ENCODE measurements at regions of chr1 and their contacts with region 1.

Region 1: GRCh38 chr1:1943834-1944570 is 24.9 kb upstream of the TMEM52 start:
- DNase-seq: no peak
- ATAC-seq: peak; percentile 94
- H3K4me3 ChIP-seq: no peak overlapping the region
- H3K27ac ChIP-seq: no peak overlapping the region
- H3K4me1 ChIP-seq: no peaks in the 10 kb centered on the region
- H3K27me3 ChIP-seq: no peaks in the 10 kb centered on the region
- CTCF ChIP-seq: peak; percentile 50 to 91 (median 71)
- EP300 ChIP-seq: no peak
- POLR2A ChIP-seq: no peak
- RAD21 ChIP-seq: 0 out of 2 replicates have a peak, but pooled peaks have one; percentile 14

Region 2: DNA sequence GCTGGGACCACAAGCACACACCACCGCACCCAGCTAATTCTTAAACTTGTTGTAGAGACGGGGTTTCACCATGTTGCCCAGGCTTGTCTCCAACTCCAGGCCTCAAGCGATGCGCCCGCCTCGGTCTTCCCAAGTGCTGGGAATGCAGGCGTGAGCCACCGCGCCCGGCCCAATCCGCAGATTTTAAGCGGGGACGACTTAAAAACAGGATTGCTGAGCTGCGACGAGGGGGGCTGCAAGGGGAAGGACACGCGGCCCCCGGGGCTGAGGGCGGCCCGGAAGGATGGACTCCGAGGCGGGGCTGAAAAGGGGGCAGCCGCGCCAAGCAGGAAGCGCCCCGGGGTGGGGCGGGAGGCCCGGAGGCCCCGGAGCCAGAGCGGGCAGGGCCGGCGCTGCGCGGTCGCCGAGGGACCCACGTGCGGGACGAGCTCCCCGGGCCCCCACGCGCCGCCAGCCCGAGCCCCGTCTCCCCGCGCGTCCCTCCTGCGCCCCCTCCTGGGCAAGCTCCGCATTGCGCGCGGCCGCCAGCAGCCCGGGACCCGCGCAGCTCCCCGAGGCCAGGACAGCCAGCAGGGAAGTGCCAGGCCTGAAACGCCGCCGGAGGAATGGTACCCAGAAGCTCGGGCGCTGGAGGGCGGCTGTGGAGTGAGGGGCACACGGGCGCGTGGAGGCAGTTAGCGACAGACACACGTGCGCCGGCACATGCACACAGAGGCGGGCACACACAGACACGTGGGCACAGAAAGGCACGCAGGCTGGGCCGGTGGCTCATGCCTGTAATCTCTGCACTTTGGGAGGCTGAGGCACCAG is 100.7 kb after region 1 on chr1:
- CTCF ChIA-PET with region 1: no interaction called
- POLR2A ChIA-PET with region 1: no interaction called
- RAD21 ChIA-PET with region 1: no interaction called
- SMC1A ChIA-PET with region 1: interaction called, 3 read pairs
- in situ Hi-C with region 1: no loop called
- intact Hi-C with region 1: loop called (anchors 5 kb)
- DNase-seq: no peak
- ATAC-seq: peak; percentile 85
- H3K4me3 ChIP-seq: no peak overlapping the region
- H3K27ac ChIP-seq: no peak overlapping the region
- H3K4me1 ChIP-seq: no peaks in the 10 kb centered on the region
- H3K27me3 ChIP-seq: peaks cover 0 to 4% of the 10 kb centered on the region in 2 experiments; a peak in 3 of 4 replicates
- CTCF ChIP-seq: peak; percentile 65 to 69 (median 69); a peak in 5 of 6 replicates
- EP300 ChIP-seq: no peak
- POLR2A ChIP-seq: no peak
- RAD21 ChIP-seq: peak; percentile 53